HCT116 (cell line): ENCODE measurements at regions of chr3 and their contacts with region 1.

Region 1: GRCh38 chr3:116770815-116771450 is 61.4 kb downstream of the TUSC7 start:
- DNase-seq: peak; percentile 54
- ATAC-seq: peak; percentile 89
- H3K4me3 ChIP-seq: no peak overlapping the region
- H3K27ac ChIP-seq: no peak overlapping the region
- H3K4me1 ChIP-seq: no peaks in the 10 kb centered on the region
- H3K27me3 ChIP-seq: peaks cover 5% of the 10 kb centered on the region; the same call in 1 of the 2 replicates
- CTCF ChIP-seq: peak; percentile 86 to 98 (median 97)
- POLR2A ChIP-seq: no peak
- RAD21 ChIP-seq: peak; percentile 85

Region 2: DNA sequence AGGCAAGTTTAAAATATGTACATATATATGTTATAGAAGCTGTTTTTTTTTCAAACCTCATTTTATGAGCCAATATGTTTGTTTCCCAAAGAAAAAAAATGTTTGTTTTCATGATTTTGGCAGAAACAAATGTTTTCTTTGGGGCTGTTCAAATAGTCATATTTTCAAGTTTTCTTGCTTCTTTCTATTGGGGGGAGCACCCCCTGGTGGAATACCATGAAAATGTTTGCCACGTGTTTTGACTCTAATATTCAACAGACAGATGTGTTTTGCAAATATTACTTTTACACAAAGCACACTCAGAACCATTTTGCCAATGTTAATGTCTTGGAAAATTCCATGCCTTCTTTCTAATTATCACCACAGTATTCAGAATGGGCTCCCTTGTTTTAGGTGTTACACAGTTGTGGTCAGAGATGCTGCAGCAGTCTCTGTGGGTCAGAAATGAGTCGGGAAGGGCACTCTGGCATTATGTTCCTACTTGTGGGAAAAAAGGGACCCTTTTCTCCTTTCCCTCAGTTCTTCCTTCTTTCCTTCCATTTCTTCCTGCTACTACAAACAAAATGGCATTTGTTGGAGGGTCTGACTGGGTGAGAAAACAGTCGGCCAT is 755.6 kb after region 1 on chr3:
- CTCF ChIA-PET with region 1: interaction called, 7 read pairs
- POLR2A ChIA-PET with region 1: no interaction called
- RAD21 ChIA-PET with region 1: no interaction called
- intact Hi-C with region 1: loop called (anchors 5 kb)
- DNase-seq: peak; percentile 2
- ATAC-seq: no peak
- H3K4me3 ChIP-seq: no peak overlapping the region
- H3K27ac ChIP-seq: no peak overlapping the region
- H3K4me1 ChIP-seq: no peaks in the 10 kb centered on the region
- H3K27me3 ChIP-seq: no peaks in the 10 kb centered on the region
- CTCF ChIP-seq: peak; percentile 17 to 58 (median 39); a peak in 5 of 6 replicates
- POLR2A ChIP-seq: no peak
- RAD21 ChIP-seq: peak; percentile 28; the same call in 1 of the 2 replicates

Region 3: DNA sequence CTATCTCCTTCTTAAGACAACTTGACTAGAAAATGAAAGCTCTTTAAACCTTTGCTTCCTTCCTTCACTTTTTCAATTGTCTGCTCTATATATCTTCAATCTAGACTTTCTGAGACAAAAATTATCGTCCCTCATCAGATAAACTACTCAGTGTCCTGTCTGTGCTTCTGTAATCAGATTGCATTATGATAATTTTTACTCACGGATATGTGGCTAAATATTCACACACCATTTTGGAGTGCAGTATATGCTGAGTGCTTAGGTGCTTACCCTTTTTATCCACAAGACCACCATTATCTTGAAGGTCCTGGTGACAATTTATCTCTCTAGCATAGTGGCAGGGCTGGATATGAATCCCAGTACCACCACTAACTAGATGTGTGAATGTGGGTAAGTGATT is 950.9 kb after region 1 on chr3:
- CTCF ChIA-PET with region 1: interaction called, 6 read pairs
- POLR2A ChIA-PET with region 1: no interaction called
- RAD21 ChIA-PET with region 1: no interaction called
- intact Hi-C with region 1: loop called (anchors 2 kb)
- DNase-seq: no peak
- ATAC-seq: no peak
- H3K4me3 ChIP-seq: no peak overlapping the region
- H3K27ac ChIP-seq: no peak overlapping the region
- H3K4me1 ChIP-seq: no peaks in the 10 kb centered on the region
- H3K27me3 ChIP-seq: no peaks in the 10 kb centered on the region
- CTCF ChIP-seq: no peak
- POLR2A ChIP-seq: no peak
- RAD21 ChIP-seq: no peak

Region 4: DNA sequence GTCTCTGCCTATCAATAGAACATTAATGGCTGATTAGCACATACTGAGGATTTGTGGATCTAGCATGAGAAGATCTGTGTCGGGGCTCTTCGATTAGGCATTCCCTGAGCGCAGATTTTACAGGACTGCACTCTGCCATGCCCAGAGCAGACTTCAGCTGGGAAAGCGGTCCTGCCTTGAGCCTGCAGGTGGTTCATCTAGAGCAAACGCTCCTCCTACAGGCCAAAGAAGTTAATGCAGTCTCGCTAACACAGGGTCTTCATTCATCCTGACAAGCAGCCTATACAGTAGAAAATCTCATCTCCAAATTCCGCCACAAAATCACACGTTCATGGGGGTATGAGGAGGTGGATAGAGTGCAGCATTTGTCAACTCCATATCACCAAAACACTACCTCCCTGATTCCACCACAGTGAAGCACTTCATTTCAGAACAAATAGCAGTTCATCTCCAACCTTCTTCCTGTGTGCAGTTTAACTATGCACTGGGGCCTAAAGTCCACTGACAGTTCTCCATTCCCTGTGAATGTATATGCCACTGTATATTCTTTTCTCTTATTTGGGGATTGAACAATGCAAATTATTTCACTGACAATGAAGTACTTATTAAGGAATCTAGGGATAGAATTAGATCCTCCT is 1857.9 kb after region 1 on chr3:
- CTCF ChIA-PET with region 1: no interaction called
- POLR2A ChIA-PET with region 1: no interaction called
- RAD21 ChIA-PET with region 1: no interaction called
- intact Hi-C with region 1: loop called (anchors 2 kb)
- DNase-seq: peak; percentile 59
- ATAC-seq: peak; percentile 98
- H3K4me3 ChIP-seq: no peak overlapping the region
- H3K27ac ChIP-seq: no peak overlapping the region
- H3K4me1 ChIP-seq: no peaks in the 10 kb centered on the region
- H3K27me3 ChIP-seq: no peaks in the 10 kb centered on the region
- CTCF ChIP-seq: peak; percentile 34 to 77 (median 71); a peak in 5 of 6 replicates
- POLR2A ChIP-seq: no peak
- RAD21 ChIP-seq: peak; percentile 80